Right cardiac atrium (tissue), 5 donors: ENCODE measurements at regions of chr15 and their contacts with region 1.

Region 1: DNA sequence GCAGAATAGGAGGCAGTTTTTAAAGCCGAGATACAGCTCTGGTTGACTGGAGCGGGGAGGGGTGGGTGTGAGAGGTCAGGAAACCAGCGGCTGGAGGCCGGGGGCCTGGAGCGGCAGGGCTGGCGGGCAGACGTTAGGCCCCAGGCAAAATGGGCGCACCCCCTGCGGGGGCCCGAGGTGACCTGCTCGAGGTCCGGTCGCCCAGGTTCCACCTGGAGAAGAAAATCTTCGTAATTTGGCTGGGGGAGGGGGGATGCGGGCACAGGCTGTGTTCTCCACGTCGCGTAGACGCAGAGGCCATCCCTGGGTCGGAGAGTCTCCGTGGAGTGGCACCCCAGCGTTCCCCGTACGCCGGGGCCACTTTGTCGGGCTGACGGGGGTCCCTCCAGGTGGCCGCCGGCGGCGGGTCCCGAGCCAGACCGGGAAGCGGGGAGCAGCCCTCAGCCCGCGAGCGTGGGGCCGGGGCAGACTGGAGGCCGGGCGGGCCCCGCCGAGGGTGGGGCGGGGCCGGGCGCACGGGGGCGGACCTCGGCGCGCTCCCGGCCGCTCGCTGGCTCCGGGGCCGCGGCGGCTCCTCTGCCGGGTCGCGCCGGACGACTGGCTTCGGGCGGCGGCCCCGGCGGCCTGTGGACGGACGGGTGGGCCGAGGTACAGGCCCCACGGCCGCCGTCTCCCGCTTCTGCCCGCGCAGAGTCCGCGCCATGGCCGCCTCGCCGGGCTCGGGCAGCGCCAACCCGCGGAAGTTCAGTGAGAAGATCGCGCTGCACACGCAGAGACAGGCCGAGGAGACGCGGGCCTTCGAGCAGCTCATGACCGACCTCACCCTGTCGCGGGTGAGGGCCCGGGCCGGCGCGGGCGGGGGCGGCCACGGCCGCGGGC is at the start of gene CRTC3:
- DNase-seq: peak; percentile 45 to 84 (median 81)
- ATAC-seq: peak; percentile 91 to 95
- H3K4me3 ChIP-seq: peak within 1 kb of the TSS; percentile 87
- H3K27ac ChIP-seq: peak within 1 kb of the TSS; percentile 89
- H3K4me1 ChIP-seq: peaks cover 2% of the 10 kb centered on the region
- H3K27me3 ChIP-seq: no peaks in the 10 kb centered on the region
- total RNA-seq, gene CRTC3: 27.2 to 35.5 (median 30.6) TPM

Region 2: DNA sequence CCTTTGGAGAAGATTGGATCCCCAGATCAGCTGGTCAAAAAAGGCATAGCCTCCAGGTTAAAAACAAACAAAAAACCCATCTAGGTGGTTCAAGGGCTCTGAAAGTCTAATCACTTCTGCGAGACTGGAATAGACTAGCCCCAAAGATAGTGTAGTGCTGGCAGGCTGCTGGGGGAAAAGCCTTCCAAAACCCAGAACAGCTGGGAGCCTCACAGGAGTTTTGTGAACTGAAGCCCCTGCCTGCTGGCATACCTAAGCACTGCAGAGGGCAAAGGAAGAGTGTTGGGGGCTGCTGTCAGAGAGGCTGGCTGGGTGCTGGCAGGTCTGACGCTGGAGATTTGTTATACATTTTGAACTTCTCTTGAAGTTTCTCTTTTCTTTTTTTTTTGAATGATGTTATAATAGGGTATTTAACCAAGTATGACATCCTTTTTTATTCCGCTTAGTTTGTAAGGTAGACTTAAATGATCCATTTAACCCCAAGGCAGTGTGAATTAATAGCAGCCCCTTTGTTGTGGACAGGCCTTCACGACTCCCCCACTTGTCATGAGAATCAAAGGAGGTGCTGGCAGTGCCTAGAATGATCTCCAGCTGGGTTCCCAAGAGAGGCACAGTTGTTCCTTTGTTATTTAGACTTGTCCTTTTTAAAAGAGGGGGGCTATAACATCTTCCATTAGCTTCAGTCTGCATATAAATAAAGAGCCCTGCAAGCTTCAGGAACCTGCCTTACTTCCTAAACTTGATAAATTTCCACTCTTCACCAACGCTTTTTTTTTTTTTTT is 54.1 kb after region 1 on chr15:
- intact Hi-C with region 1: no loop called
- DNase-seq: peak in 1 of 3 donors; percentile 53
- ATAC-seq: peak in 1 of 2 donors; percentile 30
- H3K4me3 ChIP-seq: no peak overlapping the region
- H3K27ac ChIP-seq: no peak overlapping the region
- H3K4me1 ChIP-seq: peaks cover 12% of the 10 kb centered on the region
- H3K27me3 ChIP-seq: no peaks in the 10 kb centered on the region

Region 3: DNA sequence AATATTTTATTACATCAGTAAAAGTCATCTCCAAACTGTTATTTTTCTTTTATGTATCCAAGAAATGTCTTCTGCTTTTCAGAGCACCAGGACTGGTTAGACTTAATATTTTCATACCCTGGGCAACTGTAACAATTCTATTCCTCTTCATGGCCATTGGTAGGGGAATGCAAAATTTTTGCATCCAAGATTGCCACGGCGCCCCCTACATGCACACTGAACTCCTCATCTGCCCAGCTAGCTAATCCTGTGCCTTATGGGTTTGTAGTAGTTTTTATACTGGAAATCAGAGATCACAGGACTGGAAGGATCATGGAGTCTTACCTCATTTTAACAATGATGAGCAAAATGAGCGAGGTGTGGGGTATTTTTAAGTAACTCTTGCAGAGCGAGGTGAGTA is 74.3 kb after region 1 on chr15:
- intact Hi-C with region 1: loop called in 2 of 4 experiments (anchors 5 to 10 kb)
- DNase-seq: peak; percentile 37 to 72 (median 69)
- ATAC-seq: peak in 1 of 2 donors; percentile 27
- H3K4me3 ChIP-seq: no peak overlapping the region
- H3K27ac ChIP-seq: no peak overlapping the region
- H3K4me1 ChIP-seq: no peaks in the 10 kb centered on the region
- H3K27me3 ChIP-seq: no peaks in the 10 kb centered on the region